Posterior cingulate gyrus (tissue), 11 donors: ENCODE measurements at regions of chr13 and their contacts with region 1.

Region 1: GRCh38 chr13:80342471-80343380 is 1.8 kb upstream of the SPRY2 start:
- DNase-seq: peak; percentile 77 to 98 (median 85)

Region 2: DNA sequence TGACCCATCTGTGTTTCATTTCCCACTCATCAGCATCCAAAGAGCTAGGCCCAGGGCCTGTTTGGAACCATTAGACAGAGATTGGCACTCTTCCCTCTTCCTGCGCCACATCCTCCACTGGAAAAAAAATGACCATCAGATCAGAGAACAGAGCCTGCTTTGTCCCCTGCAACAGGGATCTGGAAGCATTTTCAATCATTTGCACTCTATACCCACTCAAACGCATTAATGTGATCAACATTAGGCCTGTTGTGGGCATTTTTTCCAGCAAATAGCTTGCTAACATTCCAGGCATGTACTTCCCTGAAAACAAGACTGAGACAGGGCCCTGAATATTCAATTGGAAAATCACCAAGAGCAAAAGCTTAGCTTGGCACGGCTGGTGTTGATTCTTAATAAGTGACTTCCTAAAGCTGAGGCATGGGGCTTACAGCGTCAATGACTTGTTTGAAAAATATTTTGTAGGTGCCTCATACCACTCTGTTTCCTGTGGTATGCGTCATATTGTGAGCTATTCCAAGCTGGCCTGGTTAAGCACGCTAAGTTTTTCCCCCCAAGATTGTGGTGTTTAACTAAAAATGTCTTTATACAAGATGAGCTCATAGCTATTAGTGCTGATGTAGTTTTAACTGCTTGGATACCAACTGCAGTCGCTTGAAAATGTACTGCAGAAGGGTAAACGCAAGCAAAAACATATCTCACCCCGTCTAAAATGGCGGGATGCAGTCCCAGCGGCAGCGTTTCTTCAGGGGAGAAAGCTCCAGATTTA is 406.2 kb before region 1 on chr13:
- intact Hi-C with region 1: loop called (anchors 2 kb)
- DNase-seq: peak in 8 of 10 donors; percentile 21 to 82 (median 52)

Region 3: GRCh38 chr13:80012251-80012650 is 330.5 kb before region 1 on chr13:
- intact Hi-C with region 1: loop called (anchors 5 kb)
- DNase-seq: peak in 1 of 10 donors; percentile 59

Region 4: DNA sequence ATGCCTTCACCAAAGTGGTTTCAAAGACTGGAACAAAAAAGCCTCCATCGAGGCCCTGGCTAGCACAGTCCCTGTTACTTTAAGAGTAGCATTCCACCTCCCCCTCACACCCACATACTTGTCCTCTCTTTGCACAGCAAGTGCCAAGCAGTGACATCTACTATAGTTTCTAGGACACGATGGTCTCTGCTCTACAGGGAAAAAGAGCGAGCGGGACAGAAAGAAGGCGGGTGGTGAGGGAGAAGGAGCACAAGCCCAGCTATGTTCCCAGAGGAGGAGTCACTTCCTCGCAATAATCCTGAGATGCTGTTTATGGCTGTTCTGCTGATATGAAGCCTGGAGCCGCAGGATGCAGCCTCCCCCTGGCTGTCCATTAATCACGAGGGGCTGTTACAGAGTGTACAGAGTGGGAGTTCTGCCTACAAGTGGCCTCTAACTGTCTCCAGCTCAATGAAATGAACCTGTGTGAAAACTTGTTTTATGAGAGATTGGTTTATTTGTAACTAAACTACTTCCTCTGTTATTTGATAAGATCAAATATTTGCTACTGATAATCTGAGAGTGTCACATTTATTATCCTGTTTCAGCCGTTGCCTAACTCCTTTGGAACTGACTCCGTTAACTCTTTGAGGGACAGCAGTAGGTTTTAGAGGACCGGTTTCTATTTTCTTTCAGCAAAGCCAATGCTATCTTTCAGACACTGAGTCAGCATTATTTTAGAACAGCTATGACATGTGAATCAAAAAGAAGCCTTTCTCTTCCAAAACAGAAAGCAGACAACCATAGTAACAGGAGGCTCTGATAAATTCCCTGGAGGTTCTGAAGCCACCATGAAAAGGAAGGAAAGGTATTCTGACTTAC is 209.8 kb before region 1 on chr13:
- intact Hi-C with region 1: loop called (anchors 1 kb)
- DNase-seq: peak; percentile 41 to 92 (median 66)

Region 5: GRCh38 chr13:80454245-80454644 is 111.5 kb after region 1 on chr13:
- intact Hi-C with region 1: no loop called
- DNase-seq: no peak

Region 6: DNA sequence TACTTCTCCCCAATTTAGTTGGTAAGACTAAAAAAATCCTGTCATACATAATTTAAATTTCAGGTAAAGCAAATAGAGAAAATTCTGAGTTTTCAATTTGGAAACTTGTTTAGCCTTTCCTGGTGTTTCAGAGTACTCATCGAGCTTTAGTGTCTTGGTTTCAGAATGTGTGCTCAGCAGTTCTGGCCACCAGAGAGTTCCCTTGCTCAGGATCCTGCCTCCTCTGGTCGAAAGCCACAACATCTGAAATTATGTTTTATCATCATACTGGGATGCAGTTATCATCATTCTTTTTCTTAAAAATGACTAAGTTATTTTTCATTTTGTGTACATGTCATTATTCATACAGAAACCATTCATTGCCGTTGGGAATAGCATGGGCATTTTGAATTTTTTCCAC is 261.4 kb after region 1 on chr13:
- intact Hi-C with region 1: no loop called
- DNase-seq: no peak

Region 7: DNA sequence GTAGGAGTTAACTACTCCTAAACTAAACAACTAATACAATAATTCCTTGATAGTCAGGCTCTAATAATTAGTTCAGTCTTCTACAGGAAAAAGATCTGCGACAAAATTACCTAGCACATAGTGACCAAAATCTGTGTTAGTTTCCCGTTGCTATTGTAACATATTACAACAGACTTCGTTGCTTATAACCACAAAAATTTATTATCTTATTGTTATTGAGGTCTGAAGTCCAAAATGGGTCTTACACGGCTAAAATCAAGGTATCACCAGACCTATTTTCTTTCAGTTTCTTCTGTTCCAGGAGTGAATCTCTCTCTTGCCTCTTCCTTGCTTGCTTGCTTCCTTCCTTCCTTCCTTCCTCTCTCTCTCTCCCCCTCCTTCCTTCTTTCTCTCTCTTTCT is 991.8 kb after region 1 on chr13:
- intact Hi-C with region 1: no loop called
- DNase-seq: no peak